CD8-positive, alpha-beta T cell (primary cell): ENCODE measurements at regions of chr1 and their contacts with region 1.

Region 1: DNA sequence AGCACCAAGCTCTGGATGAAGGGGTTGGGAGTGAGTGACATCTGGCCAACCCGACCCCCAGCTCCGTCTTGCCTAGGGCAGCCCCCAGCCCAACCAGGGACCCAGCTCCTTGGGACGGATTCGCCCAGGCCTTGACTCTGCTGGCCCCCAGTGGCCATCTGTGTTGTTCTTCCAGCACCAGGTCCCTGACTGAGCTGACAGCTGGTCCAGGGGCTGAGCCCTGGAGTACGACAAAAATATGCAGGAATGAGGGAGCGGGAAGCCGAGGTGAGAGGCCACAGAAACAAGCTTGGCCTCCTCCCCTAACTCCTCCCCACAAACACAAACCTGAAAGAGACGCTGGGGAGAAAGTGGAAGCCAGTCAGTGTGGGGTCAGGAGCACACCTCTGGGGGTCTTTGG is 55.0 kb upstream of the PAX7 start:
- DNase-seq: peak in 8 of 9 experiments; percentile 16 to 61 (median 47)
- ATAC-seq: no peak
- H3K4me3 ChIP-seq: no peak overlapping the region
- H3K4me3 Mint-ChIP-seq: no peak overlapping the region
- H3K27ac ChIP-seq: no peak overlapping the region
- H3K27ac Mint-ChIP-seq: no peak overlapping the region
- H3K4me1 ChIP-seq: no peaks in the 10 kb centered on the region
- H3K4me1 Mint-ChIP-seq: no peaks in the 10 kb centered on the region
- H3K27me3 ChIP-seq: peaks cover 0 to 3% of the 10 kb centered on the region in 2 experiments
- H3K27me3 Mint-ChIP-seq: peaks cover 10% of the 10 kb centered on the region
- CTCF ChIP-seq: no peak

Region 2: DNA sequence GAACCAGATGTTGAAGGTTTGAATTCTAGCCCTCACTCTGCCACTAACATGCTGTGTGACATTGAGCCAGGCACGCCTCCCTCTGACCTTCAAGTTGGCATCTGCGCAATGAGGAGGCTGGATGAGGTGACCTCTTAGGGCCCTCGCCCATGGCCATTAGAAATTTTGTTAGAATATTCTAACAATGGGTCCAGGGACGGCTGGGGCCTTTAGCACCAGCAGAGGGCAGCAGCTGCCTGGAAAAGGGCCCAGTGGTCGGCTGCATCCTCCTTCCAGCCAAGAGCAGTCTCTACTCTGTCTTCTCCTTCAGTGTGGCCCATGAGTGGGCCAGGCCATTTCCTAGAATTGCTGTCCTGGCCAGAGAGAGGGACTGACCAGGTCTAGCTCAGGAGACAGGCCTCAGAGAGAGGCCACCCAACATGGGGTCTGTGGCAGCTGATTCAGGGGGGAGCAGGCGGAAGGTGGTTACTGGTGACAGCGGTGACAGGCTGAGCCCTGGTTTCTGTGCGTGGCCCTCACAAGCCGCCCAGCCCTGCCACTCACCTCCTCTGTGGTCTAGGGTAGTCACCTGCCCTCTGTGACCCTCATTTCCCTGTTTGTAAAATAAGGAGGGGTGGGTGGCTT is 921.8 kb before region 1 on chr1:
- CTCF ChIA-PET with region 1: no interaction called
- POLR2A ChIA-PET with region 1: no interaction called
- intact Hi-C with region 1: loop called in 1 of 2 experiments (anchors 2 kb)
- DNase-seq: peak in 6 of 9 experiments; percentile 11 to 51 (median 20)
- ATAC-seq: no peak
- H3K4me3 ChIP-seq: no peak overlapping the region
- H3K4me3 Mint-ChIP-seq: no peak overlapping the region
- H3K27ac ChIP-seq: no peak overlapping the region
- H3K27ac Mint-ChIP-seq: no peak overlapping the region
- H3K4me1 ChIP-seq: no peaks in the 10 kb centered on the region
- H3K4me1 Mint-ChIP-seq: no peaks in the 10 kb centered on the region
- H3K27me3 ChIP-seq: no peaks in the 10 kb centered on the region
- H3K27me3 Mint-ChIP-seq: no peaks in the 10 kb centered on the region
- CTCF ChIP-seq: peak; percentile 34

Region 3: GRCh38 chr1:18564676-18565075 is 10.9 kb before region 1 on chr1:
- CTCF ChIA-PET with region 1: interaction called, 10 read pairs
- POLR2A ChIA-PET with region 1: no interaction called
- intact Hi-C with region 1: no loop called
- DNase-seq: no peak
- ATAC-seq: no peak
- H3K4me3 ChIP-seq: no peak overlapping the region
- H3K4me3 Mint-ChIP-seq: no peak overlapping the region
- H3K27ac ChIP-seq: no peak overlapping the region
- H3K27ac Mint-ChIP-seq: no peak overlapping the region
- H3K4me1 ChIP-seq: no peaks in the 10 kb centered on the region
- H3K4me1 Mint-ChIP-seq: no peaks in the 10 kb centered on the region
- H3K27me3 ChIP-seq: no peaks in the 10 kb centered on the region
- H3K27me3 Mint-ChIP-seq: peaks cover 32% of the 10 kb centered on the region
- CTCF ChIP-seq: no peak

Region 4: DNA sequence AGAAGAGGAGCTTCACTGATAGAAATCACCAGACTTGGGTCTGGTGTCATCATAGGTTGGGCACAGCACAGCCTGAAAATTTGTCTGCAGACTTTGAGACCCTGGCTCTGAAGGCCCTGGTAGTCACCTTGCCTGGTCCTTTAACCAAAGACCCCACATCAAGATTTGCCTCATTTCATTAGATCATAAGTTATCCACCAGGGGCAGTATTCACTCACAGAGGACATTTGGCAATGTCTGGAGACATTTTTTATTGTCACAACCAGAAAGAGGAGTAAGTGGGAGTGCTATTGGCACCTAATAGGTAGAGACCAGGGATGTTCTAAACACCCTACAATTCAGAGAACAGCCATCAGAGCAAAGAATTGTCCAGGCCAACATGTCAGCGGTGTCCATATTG is 32.9 kb after region 1 on chr1:
- CTCF ChIA-PET with region 1: no interaction called
- POLR2A ChIA-PET with region 1: no interaction called
- intact Hi-C with region 1: no loop called
- DNase-seq: no peak
- ATAC-seq: no peak
- H3K4me3 ChIP-seq: no peak overlapping the region
- H3K4me3 Mint-ChIP-seq: no peak overlapping the region
- H3K27ac ChIP-seq: no peak overlapping the region
- H3K27ac Mint-ChIP-seq: no peak overlapping the region
- H3K4me1 ChIP-seq: no peaks in the 10 kb centered on the region
- H3K4me1 Mint-ChIP-seq: no peaks in the 10 kb centered on the region
- H3K27me3 ChIP-seq: no peaks in the 10 kb centered on the region
- H3K27me3 Mint-ChIP-seq: peaks cover 13% of the 10 kb centered on the region
- CTCF ChIP-seq: no peak

Region 5: DNA sequence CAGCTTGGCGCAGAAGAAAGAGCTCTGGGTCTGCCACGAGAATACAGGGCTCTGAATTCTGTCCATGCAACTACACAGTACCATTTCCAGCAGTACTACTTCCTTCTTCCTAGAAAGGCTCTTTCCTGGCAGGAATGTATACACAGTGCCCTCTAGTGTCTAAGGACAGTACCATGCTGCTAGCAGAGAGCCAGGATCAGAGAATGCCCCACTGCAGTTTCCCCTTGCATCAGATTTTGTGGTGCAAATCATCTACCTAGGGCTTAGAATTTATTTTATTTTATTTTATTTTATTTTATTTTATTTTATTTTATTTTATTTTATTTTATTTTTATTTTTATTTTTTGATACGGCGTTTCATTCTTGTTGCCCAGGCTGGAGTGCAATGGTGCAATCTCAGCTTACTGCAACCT is 105.8 kb after region 1 on chr1:
- CTCF ChIA-PET with region 1: no interaction called
- POLR2A ChIA-PET with region 1: no interaction called
- intact Hi-C with region 1: no loop called
- DNase-seq: peak in 3 of 9 experiments; percentile 16 to 53 (median 17)
- ATAC-seq: no peak
- H3K4me3 ChIP-seq: no peak overlapping the region
- H3K4me3 Mint-ChIP-seq: no peak overlapping the region
- H3K27ac ChIP-seq: no peak overlapping the region
- H3K27ac Mint-ChIP-seq: no peak overlapping the region
- H3K4me1 ChIP-seq: no peaks in the 10 kb centered on the region
- H3K4me1 Mint-ChIP-seq: peaks cover 7% of the 10 kb centered on the region
- H3K27me3 ChIP-seq: peaks cover 0 to 2% of the 10 kb centered on the region in 2 experiments
- H3K27me3 Mint-ChIP-seq: peaks cover 15% of the 10 kb centered on the region
- CTCF ChIP-seq: peak; percentile 62